Naive thymus-derived CD4-positive, alpha-beta T cell (primary cell): ENCODE measurements at regions of chr5 and their contacts with region 1.

Region 1: DNA sequence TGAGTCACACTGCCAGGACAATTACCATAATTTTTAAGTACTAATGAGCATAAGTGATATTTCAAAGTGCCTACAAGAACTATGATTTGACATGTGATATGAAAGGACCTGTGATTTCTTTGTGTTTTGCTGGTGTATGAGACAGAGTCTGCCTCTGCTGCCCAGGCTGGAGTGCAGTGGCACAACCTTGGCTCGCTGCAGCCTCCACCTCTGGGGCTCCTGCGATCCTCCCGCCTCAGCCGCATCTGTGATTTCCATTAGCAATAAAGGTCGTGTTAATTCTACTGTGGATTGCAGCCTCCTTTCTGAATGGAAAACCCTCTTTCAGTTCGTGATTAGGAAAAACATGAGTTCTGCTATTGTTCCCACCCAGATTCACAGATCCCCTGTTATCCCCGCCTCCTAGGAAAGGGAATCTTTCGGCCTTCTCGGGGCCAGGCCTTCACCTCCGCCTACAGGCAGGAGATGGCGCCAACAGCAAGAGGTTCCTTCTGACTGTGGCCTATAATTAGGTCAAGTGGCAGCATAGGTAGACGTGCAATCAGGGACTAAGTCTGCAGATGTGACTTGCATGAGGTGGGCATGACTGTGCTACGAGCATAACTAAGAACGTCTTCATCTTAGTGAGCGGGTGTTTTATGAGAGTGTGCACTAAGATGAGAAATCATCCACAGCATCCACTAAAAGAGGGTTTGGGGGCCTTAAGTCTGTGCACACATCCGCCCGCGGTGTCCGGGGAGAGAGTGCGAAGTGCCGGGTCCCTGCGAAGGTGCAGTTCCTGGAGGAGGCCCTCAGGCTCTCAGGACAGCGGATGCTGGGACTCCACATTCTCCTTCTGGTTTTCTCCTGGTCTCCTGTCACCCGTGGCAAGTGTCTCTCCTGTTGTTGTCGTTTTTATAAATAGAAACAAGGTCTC is 23.1 kb downstream of the TRIM7 start:
- DNase-seq: peak in 7 of 9 donors; percentile 38 to 72 (median 68)
- ATAC-seq: peak; percentile 81
- H3K4me3 ChIP-seq: no peak overlapping the region
- H3K4me3 Mint-ChIP-seq: peak overlapping the region; percentile 11 to 95 (median 50)
- H3K27ac ChIP-seq: no peak overlapping the region
- H3K27ac Mint-ChIP-seq: peak overlapping the region in 8 of 9 donors; percentile 2 to 92 (median 87)
- H3K4me1 ChIP-seq: peaks cover 3 to 8% of the 10 kb centered on the region in 2 donors
- H3K4me1 Mint-ChIP-seq: peaks cover 6 to 44% (median 31%) of the 10 kb centered on the region in 7 donors
- H3K27me3 ChIP-seq: no peaks in the 10 kb centered on the region
- H3K27me3 Mint-ChIP-seq: peaks cover 0 to 17% (median 0%) of the 10 kb centered on the region in 5 donors

Region 2: GRCh38 chr5:180898621-180899246 is 283.2 kb before region 1 on chr5 and contains the start of gene BTNL8:
- CTCF ChIA-PET with region 1: no interaction called
- POLR2A ChIA-PET with region 1: no interaction called
- intact Hi-C with region 1: no loop called
- DNase-seq: no peak
- ATAC-seq: no peak
- H3K4me3 ChIP-seq: no peak within 1 kb of the TSS
- H3K4me3 Mint-ChIP-seq: no peak within 1 kb of the TSS
- H3K27ac ChIP-seq: no peak within 1 kb of the TSS
- H3K27ac Mint-ChIP-seq: no peak within 1 kb of the TSS
- H3K4me1 ChIP-seq: no peaks in the 10 kb centered on the region
- H3K4me1 Mint-ChIP-seq: no peaks in the 10 kb centered on the region
- H3K27me3 ChIP-seq: no peaks in the 10 kb centered on the region
- H3K27me3 Mint-ChIP-seq: peaks cover 0 to 8% (median 0%) of the 10 kb centered on the region in 5 donors
- total RNA-seq, gene BTNL8: not detected

Region 3: GRCh38 chr5:180908998-180909731 is 272.7 kb before region 1 on chr5:
- CTCF ChIA-PET with region 1: no interaction called
- POLR2A ChIA-PET with region 1: no interaction called
- intact Hi-C with region 1: no loop called
- DNase-seq: no peak
- ATAC-seq: no peak
- H3K4me3 ChIP-seq: no peak overlapping the region
- H3K4me3 Mint-ChIP-seq: no peak overlapping the region
- H3K27ac ChIP-seq: no peak overlapping the region
- H3K27ac Mint-ChIP-seq: no peak overlapping the region
- H3K4me1 ChIP-seq: no peaks in the 10 kb centered on the region
- H3K4me1 Mint-ChIP-seq: no peaks in the 10 kb centered on the region
- H3K27me3 ChIP-seq: no peaks in the 10 kb centered on the region
- H3K27me3 Mint-ChIP-seq: peaks cover 2 to 31% (median 21%) of the 10 kb centered on the region in 5 donors

Region 4: GRCh38 chr5:181133610-181134231 is 48.2 kb before region 1 on chr5:
- CTCF ChIA-PET with region 1: no interaction called
- POLR2A ChIA-PET with region 1: no interaction called
- intact Hi-C with region 1: no loop called
- DNase-seq: no peak
- ATAC-seq: no peak
- H3K4me3 ChIP-seq: no peak overlapping the region
- H3K4me3 Mint-ChIP-seq: no peak overlapping the region
- H3K27ac ChIP-seq: no peak overlapping the region
- H3K27ac Mint-ChIP-seq: no peak overlapping the region
- H3K4me1 ChIP-seq: no peaks in the 10 kb centered on the region
- H3K4me1 Mint-ChIP-seq: peaks cover 0 to 2% (median 0%) of the 10 kb centered on the region in 7 donors
- H3K27me3 ChIP-seq: peaks cover 0 to 8% of the 10 kb centered on the region in 2 donors
- H3K27me3 Mint-ChIP-seq: peaks cover 21 to 52% (median 47%) of the 10 kb centered on the region in 5 donors

Region 5: GRCh38 chr5:181159286-181159829 is 22.6 kb before region 1 on chr5:
- CTCF ChIA-PET with region 1: interaction called, 4 read pairs
- POLR2A ChIA-PET with region 1: interaction called, 3 read pairs
- intact Hi-C with region 1: loop called in 1 of 2 experiments (anchors 1 kb)
- DNase-seq: peak; percentile 79 to 95 (median 87)
- ATAC-seq: peak; percentile 80
- H3K4me3 ChIP-seq: no peak overlapping the region
- H3K4me3 Mint-ChIP-seq: peak overlapping the region; percentile 57 to 83 (median 72)
- H3K27ac ChIP-seq: peak overlapping the region; percentile 89
- H3K27ac Mint-ChIP-seq: peak overlapping the region; percentile 73 to 97 (median 94)
- H3K4me1 ChIP-seq: peaks cover 15 to 19% of the 10 kb centered on the region in 2 donors
- H3K4me1 Mint-ChIP-seq: peaks cover 13 to 33% (median 27%) of the 10 kb centered on the region in 7 donors
- H3K27me3 ChIP-seq: no peaks in the 10 kb centered on the region
- H3K27me3 Mint-ChIP-seq: peaks cover 0 to 29% (median 17%) of the 10 kb centered on the region in 5 donors

Region 6: GRCh38 chr5:181207214-181208107 is 25.6 kb after region 1 on chr5:
- CTCF ChIA-PET with region 1: interaction called, 4 read pairs
- POLR2A ChIA-PET with region 1: interaction called, 20 read pairs
- intact Hi-C with region 1: no loop called
- DNase-seq: peak; percentile 38 to 87 (median 78)
- ATAC-seq: peak; percentile 70
- H3K4me3 ChIP-seq: peak overlapping the region; percentile 67
- H3K4me3 Mint-ChIP-seq: peak overlapping the region; percentile 88 to 99 (median 94)
- H3K27ac ChIP-seq: peak overlapping the region; percentile 73
- H3K27ac Mint-ChIP-seq: peak overlapping the region; percentile 90 to 100 (median 98)
- H3K4me1 ChIP-seq: peaks cover 5 to 11% of the 10 kb centered on the region in 2 donors
- H3K4me1 Mint-ChIP-seq: peaks cover 21 to 45% (median 37%) of the 10 kb centered on the region in 7 donors
- H3K27me3 ChIP-seq: peaks cover 0 to 4% of the 10 kb centered on the region in 2 donors
- H3K27me3 Mint-ChIP-seq: peaks cover 0 to 36% (median 11%) of the 10 kb centered on the region in 5 donors

Region 7: GRCh38 chr5:181243512-181244343 is 61.8 kb after region 1 on chr5 and contains the start of gene RACK1:
- CTCF ChIA-PET with region 1: interaction called, 3 read pairs
- POLR2A ChIA-PET with region 1: interaction called, 25 read pairs
- intact Hi-C with region 1: no loop called
- DNase-seq: peak; percentile 77 to 93 (median 91)
- ATAC-seq: peak; percentile 83
- H3K4me3 ChIP-seq: peak within 1 kb of the TSS; percentile 99
- H3K4me3 Mint-ChIP-seq: peak within 1 kb of the TSS; percentile 91 to 99 (median 98)
- H3K27ac ChIP-seq: peak within 1 kb of the TSS; percentile 91
- H3K27ac Mint-ChIP-seq: peak within 1 kb of the TSS; percentile 93 to 100 (median 97)
- H3K4me1 ChIP-seq: peaks cover 39 to 46% of the 10 kb centered on the region in 2 donors
- H3K4me1 Mint-ChIP-seq: peaks cover 45 to 78% (median 66%) of the 10 kb centered on the region in 7 donors
- H3K27me3 ChIP-seq: no peaks in the 10 kb centered on the region
- H3K27me3 Mint-ChIP-seq: no peaks in the 10 kb centered on the region
- total RNA-seq, gene RACK1: 1,703 to 2,739 (median 2,322) TPM

Region 8: DNA sequence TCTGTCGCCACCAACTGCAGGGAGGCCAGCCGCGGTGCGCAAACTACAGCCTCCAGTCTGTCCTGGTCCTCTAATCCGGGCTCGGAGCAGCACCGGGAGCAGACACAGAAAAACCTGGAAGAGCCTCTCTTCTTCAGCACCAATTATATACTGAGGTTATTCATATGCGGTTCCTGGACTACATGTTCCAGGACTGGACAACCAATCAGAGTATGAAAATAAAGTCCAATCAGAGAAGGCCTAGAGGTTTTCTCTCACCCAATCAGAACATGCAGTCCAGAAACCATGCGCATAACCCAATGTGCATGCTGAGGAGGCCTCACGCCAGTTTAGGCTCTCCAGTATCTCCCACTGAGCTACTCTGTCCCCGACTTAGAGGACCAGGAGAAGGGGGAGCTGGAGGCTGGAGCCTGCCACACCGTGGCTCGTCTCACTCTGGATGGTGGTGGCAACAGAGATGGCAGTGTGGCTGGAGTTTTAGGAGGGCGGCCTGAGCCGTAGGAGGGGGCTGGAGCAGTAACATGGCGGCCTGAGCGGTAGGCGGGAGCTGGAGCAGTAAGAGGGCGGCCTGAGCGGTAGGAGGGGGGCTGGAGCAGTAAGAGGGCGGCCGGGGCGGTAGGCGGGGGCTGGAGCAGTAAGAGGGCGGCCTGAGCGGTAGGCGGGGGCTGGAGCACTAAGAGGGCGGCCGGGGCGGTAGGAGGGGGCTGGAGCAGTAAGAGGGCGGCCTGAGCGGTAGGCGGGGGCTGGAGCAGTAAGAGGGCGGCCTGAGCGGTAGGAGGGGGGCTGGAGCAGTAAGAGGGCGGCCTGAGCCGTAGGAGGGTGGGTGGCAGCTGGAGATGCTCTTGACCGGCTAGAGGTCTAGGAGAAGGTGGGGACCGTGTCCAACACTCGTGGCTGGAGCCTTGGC is 99.4 kb after region 1 on chr5:
- CTCF ChIA-PET with region 1: no interaction called
- POLR2A ChIA-PET with region 1: no interaction called
- intact Hi-C with region 1: loop called in 1 of 2 experiments (anchors 1 kb)
- DNase-seq: no peak
- ATAC-seq: no peak
- H3K4me3 ChIP-seq: no peak overlapping the region
- H3K4me3 Mint-ChIP-seq: no peak overlapping the region
- H3K27ac ChIP-seq: no peak overlapping the region
- H3K27ac Mint-ChIP-seq: no peak overlapping the region
- H3K4me1 ChIP-seq: no peaks in the 10 kb centered on the region
- H3K4me1 Mint-ChIP-seq: peaks cover 0 to 4% (median 0%) of the 10 kb centered on the region in 7 donors
- H3K27me3 ChIP-seq: no peaks in the 10 kb centered on the region
- H3K27me3 Mint-ChIP-seq: peaks cover 0 to 7% (median 0%) of the 10 kb centered on the region in 5 donors